B cell (primary cell): ENCODE measurements at regions of chr6 and their contacts with region 1.

Region 1: GRCh38 chr6:14095437-14095836 is 22.1 kb upstream of the CD83 start:
- DNase-seq: peak; percentile 95
- ATAC-seq: peak; percentile 77
- H3K4me3 ChIP-seq: peak overlapping the region in 2 of 5 experiments; percentile 18 to 57
- H3K4me3 Mint-ChIP-seq: peak overlapping the region; percentile 81
- H3K27ac ChIP-seq: peak overlapping the region; percentile 98 to 100
- H3K27ac Mint-ChIP-seq: peak overlapping the region; percentile 99
- H3K4me1 ChIP-seq: peaks cover 86 to 90% of the 10 kb centered on the region in 2 donors
- H3K4me1 Mint-ChIP-seq: peaks cover 88% of the 10 kb centered on the region
- H3K27me3 ChIP-seq: no peaks in the 10 kb centered on the region
- H3K27me3 Mint-ChIP-seq: no peaks in the 10 kb centered on the region
- CTCF ChIP-seq: no peak

Region 2: GRCh38 chr6:14108571-14109410 is 13.4 kb after region 1 on chr6:
- CTCF ChIA-PET with region 1: interaction called, 87 read pairs
- POLR2A ChIA-PET with region 1: interaction called, 131 read pairs
- intact Hi-C with region 1: loop called (anchors 1 kb)
- DNase-seq: peak; percentile 95
- ATAC-seq: peak; percentile 81
- H3K4me3 ChIP-seq: peak overlapping the region in 3 of 5 experiments; percentile 26 to 55 (median 40)
- H3K4me3 Mint-ChIP-seq: peak overlapping the region; percentile 85
- H3K27ac ChIP-seq: peak overlapping the region; percentile 93 to 99
- H3K27ac Mint-ChIP-seq: peak overlapping the region; percentile 96
- H3K4me1 ChIP-seq: peaks cover 45 to 50% of the 10 kb centered on the region in 2 donors
- H3K4me1 Mint-ChIP-seq: peaks cover 64% of the 10 kb centered on the region
- H3K27me3 ChIP-seq: no peaks in the 10 kb centered on the region
- H3K27me3 Mint-ChIP-seq: no peaks in the 10 kb centered on the region
- CTCF ChIP-seq: no peak

Region 3: DNA sequence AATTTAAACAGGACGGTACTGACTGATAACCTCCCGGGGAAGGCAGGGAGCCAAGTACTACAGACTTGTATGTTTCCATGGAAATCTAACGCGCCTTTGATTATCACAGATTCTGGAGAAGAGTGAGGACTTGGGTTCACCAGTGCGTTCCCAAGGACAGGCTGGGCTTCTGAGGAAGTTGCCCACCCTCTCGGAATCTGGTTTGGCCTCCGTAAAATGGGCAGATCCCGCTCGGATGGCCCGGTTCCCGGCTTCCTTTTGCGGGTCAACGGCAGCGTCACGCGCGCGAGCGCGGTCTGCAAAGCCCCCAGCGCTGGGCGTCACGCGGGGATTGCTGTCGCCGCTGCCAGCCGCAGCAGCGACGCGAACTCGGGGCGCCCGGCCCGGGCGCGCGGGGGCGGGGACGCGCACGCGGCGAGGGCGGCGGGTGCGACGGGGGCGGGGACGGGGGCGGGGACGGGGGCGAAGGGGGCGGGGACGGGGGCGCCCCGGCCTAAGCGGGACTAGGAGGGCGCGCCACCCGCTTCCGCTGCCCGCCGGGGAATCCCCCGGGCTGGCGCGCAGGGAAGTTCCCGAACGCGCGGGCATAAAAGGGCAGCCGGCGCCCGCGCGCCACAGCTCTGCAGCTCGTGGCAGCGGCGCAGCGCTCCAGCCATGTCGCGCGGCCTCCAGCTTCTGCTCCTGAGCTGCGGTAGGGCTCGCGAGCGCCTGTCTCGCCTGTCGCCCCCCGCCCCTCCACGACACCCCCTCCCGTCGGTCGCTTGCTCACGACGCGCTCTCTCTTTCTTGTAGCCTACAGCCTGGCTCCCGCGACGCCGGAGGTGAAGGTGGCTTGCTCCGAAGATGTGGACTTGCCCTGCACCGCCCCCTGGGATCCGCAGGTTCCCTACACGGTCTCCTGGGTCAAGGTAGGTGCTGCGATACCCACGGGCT is 22.0 kb after region 1 on chr6 and contains the start of gene CD83:
- CTCF ChIA-PET with region 1: interaction called, 22 read pairs
- POLR2A ChIA-PET with region 1: interaction called, 105 read pairs
- intact Hi-C with region 1: loop called (anchors 1 kb)
- DNase-seq: peak; percentile 97
- ATAC-seq: peak; percentile 80
- H3K4me3 ChIP-seq: peak within 1 kb of the TSS; percentile 75 to 100 (median 94)
- H3K4me3 Mint-ChIP-seq: peak within 1 kb of the TSS; percentile 93
- H3K27ac ChIP-seq: peak within 1 kb of the TSS; percentile 99
- H3K27ac Mint-ChIP-seq: peak within 1 kb of the TSS; percentile 97
- H3K4me1 ChIP-seq: peaks cover 37 to 44% of the 10 kb centered on the region in 2 donors
- H3K4me1 Mint-ChIP-seq: peaks cover 37% of the 10 kb centered on the region
- H3K27me3 ChIP-seq: no peaks in the 10 kb centered on the region
- H3K27me3 Mint-ChIP-seq: no peaks in the 10 kb centered on the region
- CTCF ChIP-seq: no peak
- total RNA-seq, gene CD83: 332 and 339 TPM in 2 replicates

Region 4: GRCh38 chr6:14123386-14124111 is 28.1 kb after region 1 on chr6:
- CTCF ChIA-PET with region 1: interaction called, 22 read pairs
- POLR2A ChIA-PET with region 1: interaction called, 105 read pairs
- intact Hi-C with region 1: loop called (anchors 1 kb)
- DNase-seq: peak; percentile 85
- ATAC-seq: peak; percentile 6
- H3K4me3 ChIP-seq: peak overlapping the region in 2 of 5 experiments; percentile 19 to 35
- H3K4me3 Mint-ChIP-seq: peak overlapping the region; percentile 90
- H3K27ac ChIP-seq: peak overlapping the region; percentile 98 to 99
- H3K27ac Mint-ChIP-seq: peak overlapping the region; percentile 91
- H3K4me1 ChIP-seq: peaks cover 97% of the 10 kb centered on the region in 2 donors
- H3K4me1 Mint-ChIP-seq: peaks cover 76% of the 10 kb centered on the region
- H3K27me3 ChIP-seq: no peaks in the 10 kb centered on the region
- H3K27me3 Mint-ChIP-seq: no peaks in the 10 kb centered on the region
- CTCF ChIP-seq: no peak